Activated CD4-positive, alpha-beta T cell treated with anti-CD3 and anti-CD28 coated beads for 36 hours (primary cell): ENCODE measurements at regions of chr12 and their contacts with region 1.

Region 1: DNA sequence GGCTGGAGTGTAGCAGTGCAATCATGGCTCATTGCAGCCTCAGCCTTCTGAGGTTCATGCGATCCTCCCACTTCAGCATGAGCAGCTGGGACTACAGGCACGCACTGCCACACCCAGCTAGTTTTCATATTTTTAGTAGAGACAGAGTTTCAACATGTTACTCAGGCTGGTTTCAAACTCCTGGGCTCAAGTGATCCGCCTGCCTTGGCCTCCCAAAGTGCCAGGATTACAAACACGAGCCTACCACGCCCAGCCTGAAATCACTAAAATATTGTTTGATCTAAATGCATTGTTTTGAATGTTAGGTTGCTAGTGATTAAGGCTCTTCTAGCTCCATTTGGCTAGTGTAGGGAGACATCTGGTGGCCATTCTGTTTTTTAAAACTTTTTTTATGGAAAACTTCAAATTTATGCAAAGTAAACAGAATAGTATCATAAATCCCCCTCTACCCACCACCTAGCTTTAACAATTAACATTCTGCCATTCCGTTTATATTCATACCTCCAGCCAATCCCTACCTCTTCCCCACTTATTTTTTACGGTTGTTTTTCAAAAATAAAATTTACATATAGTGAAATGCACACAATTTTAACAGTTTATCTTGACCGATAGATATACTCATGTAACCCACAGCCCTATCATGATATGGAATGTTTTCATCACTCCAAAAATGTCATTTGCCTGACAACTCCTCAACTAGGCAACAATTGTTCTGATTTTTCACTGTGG is 37.8 kb downstream of the MYO1H start:
- DNase-seq: peak; percentile 9
- ATAC-seq: peak; percentile 55
- H3K4me3 Mint-ChIP-seq: no peak overlapping the region
- H3K27ac Mint-ChIP-seq: no peak overlapping the region
- H3K4me1 Mint-ChIP-seq: no peaks in the 10 kb centered on the region
- H3K27me3 Mint-ChIP-seq: peaks cover 28% of the 10 kb centered on the region

Region 2: DNA sequence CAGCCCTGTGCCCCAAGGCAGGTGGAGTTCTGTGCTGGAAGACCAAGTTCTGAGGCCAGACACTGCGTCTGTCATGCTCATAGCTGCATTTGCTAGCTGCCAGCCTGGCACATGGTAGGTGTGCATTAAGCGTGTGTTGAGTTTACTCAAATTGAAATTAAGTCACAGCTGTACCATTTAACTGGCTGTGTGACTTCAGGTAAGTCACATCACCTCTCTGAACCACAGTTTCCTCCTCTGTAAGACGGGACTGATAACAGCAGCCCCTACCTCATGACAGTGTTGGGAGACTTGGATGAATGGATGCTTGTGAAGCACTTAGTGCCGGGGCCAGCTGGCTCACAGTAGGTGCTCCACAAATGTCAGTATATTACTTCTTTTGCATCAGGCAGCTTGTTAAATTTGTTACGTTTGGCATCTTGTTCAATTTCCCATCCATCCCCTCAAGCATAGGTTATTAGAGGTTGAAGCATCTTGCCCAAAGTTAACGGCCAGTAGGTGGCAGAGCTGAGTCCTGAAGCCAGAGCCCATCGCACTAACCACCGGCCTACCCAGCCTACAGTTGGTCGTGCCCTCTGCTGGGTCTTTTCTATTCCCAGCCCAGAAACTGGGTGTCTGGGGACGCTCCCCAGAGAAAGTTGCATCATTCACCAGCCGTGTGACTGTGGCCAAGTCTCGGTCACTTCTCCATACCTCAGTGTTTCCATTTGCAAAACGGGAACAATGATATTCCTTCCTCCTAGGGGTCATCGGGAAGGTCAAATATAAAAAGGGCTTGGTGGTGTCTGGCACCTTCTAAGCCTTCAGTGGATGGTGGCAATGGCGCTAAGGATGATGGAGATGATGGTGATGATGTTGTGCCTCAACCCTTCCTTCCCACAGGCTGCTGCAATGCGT is 501.1 kb before region 1 on chr12:
- CTCF ChIA-PET with region 1: no interaction called
- POLR2A ChIA-PET with region 1: no interaction called
- intact Hi-C with region 1: loop called in 1 of 2 experiments (anchors 10 kb)
- DNase-seq: peak; percentile 86
- ATAC-seq: peak; percentile 88
- H3K4me3 Mint-ChIP-seq: no peak overlapping the region
- H3K27ac Mint-ChIP-seq: no peak overlapping the region
- H3K4me1 Mint-ChIP-seq: no peaks in the 10 kb centered on the region
- H3K27me3 Mint-ChIP-seq: no peaks in the 10 kb centered on the region

Region 3: GRCh38 chr12:109264095-109264942 is 121.2 kb before region 1 on chr12:
- CTCF ChIA-PET with region 1: interaction called, 7 read pairs
- POLR2A ChIA-PET with region 1: no interaction called
- intact Hi-C with region 1: loop called (anchors 1 kb)
- DNase-seq: peak; percentile 77
- ATAC-seq: peak; percentile 42
- H3K4me3 Mint-ChIP-seq: no peak overlapping the region
- H3K27ac Mint-ChIP-seq: no peak overlapping the region
- H3K4me1 Mint-ChIP-seq: no peaks in the 10 kb centered on the region
- H3K27me3 Mint-ChIP-seq: no peaks in the 10 kb centered on the region